ENCODE measurements at regions of chr1 and their contacts with region 1.

Region 1: DNA sequence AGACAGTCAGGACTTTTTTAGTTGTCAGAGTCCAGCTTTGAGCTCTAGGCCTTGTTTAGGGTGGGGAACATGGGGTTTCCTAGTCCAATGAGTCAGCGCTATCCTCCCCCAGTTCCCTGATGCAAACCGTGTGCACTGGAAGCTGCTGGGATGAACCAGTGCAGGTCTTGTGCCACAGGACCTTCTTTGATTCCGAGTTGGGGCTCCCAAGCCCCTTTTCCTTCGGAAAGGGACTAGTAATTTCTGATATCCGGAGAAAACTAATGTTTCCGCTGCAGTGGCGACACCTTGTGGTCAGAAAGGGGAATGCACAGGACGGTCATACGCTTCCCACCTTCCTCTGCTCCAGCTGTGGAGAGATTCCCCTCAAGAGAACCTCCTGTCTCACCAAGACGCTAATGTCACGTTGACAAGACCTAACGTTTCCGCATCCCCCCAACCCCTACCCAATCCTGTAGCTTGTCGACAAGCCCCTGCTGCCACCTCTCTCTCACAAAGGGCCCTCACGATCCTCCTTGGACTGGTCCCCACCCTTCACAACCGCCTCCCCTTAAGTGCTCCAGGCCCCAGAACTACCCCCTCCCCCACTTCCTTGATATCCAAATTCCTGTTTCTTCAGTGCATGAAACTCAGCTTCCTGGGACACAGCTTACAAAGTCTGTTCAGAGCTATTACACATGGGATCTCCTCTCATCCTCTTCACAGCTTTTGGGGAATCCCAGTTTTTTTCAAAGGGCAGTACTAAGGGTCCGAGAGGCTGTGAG is 30.9 kb downstream of the GPA33 start:
- DNase-seq: peak; percentile 79
- H3K4me3 Mint-ChIP-seq: no peak overlapping the region
- H3K27ac Mint-ChIP-seq: no peak overlapping the region
- H3K4me1 Mint-ChIP-seq: peaks cover 5% of the 10 kb centered on the region
- H3K27me3 Mint-ChIP-seq: no peaks in the 10 kb centered on the region
- CTCF ChIP-seq: peak; percentile 99

Region 2: GRCh38 chr1:166822385-166822784 is 236.8 kb before region 1 on chr1:
- CTCF ChIA-PET with region 1: interaction called, 10 read pairs
- POLR2A ChIA-PET with region 1: no interaction called
- intact Hi-C with region 1: no loop called
- DNase-seq: no peak
- H3K4me3 Mint-ChIP-seq: no peak overlapping the region
- H3K27ac Mint-ChIP-seq: no peak overlapping the region
- H3K4me1 Mint-ChIP-seq: no peaks in the 10 kb centered on the region
- H3K27me3 Mint-ChIP-seq: no peaks in the 10 kb centered on the region
- CTCF ChIP-seq: peak; percentile 25

Region 3: DNA sequence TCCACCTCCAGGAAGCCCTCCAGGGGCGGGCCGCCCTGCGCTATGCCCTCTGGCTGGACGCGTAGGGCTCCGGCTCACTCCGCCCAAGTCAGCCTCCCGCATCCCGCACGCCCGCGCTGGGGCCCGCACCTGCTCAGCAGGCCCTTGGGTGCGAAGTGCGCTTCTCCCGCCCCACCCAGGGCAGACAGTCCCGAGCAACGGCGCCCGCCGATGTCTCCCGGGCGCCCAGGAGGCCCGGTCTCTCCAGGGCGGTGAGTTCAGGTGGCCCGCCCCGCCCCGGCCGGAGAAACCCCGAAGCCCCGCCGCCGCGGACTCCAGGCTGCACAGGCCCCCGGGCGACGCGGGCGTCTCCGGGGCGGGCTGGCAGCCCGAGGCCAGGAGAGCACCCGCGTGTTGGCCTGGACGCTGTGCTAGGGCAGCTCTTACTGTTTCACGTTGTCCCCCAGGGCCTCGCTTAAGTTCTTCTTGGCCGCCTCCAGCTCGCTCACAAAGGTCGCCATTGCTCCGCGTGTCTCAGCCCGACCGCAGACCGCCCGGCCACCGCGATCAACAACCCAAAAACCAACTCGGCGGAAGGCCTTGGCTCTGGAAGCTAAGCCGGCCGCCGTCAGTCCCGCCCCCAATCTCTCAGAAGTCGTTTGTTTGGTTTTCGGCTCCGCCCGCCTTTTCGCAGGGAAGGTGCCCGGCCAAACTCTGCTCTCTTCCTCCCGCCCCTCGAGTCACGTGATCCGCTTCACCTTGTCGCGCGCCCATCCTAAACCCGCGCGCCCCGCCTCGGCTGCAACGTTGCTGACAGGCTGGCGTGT is 183.3 kb before region 1 on chr1 and contains the start of gene TADA1:
- CTCF ChIA-PET with region 1: interaction called, 89 read pairs
- POLR2A ChIA-PET with region 1: interaction called, 9 read pairs
- intact Hi-C with region 1: no loop called
- DNase-seq: peak; percentile 100
- H3K4me3 Mint-ChIP-seq: peak within 1 kb of the TSS; percentile 92
- H3K27ac Mint-ChIP-seq: peak within 1 kb of the TSS; percentile 95
- H3K4me1 Mint-ChIP-seq: peaks cover 38% of the 10 kb centered on the region
- H3K27me3 Mint-ChIP-seq: no peaks in the 10 kb centered on the region
- CTCF ChIP-seq: no peak
- total RNA-seq, gene TADA1: 14.7 and 15.9 TPM in 2 replicates

Region 4: GRCh38 chr1:166944186-166944967 is 114.8 kb before region 1 on chr1:
- CTCF ChIA-PET with region 1: interaction called, 34 read pairs
- POLR2A ChIA-PET with region 1: no interaction called
- intact Hi-C with region 1: no loop called
- DNase-seq: no peak
- H3K4me3 Mint-ChIP-seq: no peak overlapping the region
- H3K27ac Mint-ChIP-seq: no peak overlapping the region
- H3K4me1 Mint-ChIP-seq: no peaks in the 10 kb centered on the region
- H3K27me3 Mint-ChIP-seq: peaks cover 50% of the 10 kb centered on the region
- CTCF ChIP-seq: no peak

Region 5: DNA sequence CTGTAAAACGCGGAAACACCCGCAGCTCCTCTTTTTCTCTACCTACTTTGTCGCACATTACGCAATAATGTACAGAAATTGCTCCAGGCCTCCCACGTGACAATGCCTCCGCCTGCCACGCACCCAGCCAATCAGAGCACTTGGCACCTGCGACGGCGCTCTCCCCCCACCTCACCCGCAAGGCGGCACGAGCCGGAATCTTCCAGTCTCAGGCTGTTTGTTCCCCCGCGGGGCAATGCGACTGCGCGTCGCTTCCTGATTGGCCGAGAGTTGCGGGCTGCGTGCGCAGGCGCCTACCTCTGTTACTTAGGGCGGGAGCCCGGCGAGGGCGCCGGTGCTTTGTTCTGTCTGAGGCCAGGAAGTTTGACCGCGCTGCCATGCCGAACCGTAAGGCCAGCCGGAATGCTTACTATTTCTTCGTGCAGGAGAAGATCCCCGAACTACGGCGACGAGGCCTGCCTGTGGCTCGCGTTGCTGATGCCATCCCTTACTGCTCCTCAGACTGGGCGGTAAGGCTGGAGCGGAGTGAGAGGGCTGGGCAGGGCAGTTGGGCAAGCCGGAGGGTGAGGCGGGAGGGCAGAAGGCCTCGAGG is 70.2 kb before region 1 on chr1 and contains the start of gene MAEL:
- CTCF ChIA-PET with region 1: interaction called, 11 read pairs
- POLR2A ChIA-PET with region 1: no interaction called
- intact Hi-C with region 1: no loop called
- DNase-seq: no peak
- H3K4me3 Mint-ChIP-seq: no peak within 1 kb of the TSS
- H3K27ac Mint-ChIP-seq: no peak within 1 kb of the TSS
- H3K4me1 Mint-ChIP-seq: no peaks in the 10 kb centered on the region
- H3K27me3 Mint-ChIP-seq: peaks cover 33% of the 10 kb centered on the region
- CTCF ChIP-seq: no peak
- total RNA-seq, gene MAEL: not detected in 2 replicates

Region 6: GRCh38 chr1:167114725-167115124 is 55.5 kb after region 1 on chr1:
- CTCF ChIA-PET with region 1: interaction called, 13 read pairs
- POLR2A ChIA-PET with region 1: no interaction called
- intact Hi-C with region 1: no loop called
- DNase-seq: no peak
- H3K4me3 Mint-ChIP-seq: no peak overlapping the region
- H3K27ac Mint-ChIP-seq: no peak overlapping the region
- H3K4me1 Mint-ChIP-seq: peaks cover 3% of the 10 kb centered on the region
- H3K27me3 Mint-ChIP-seq: peaks cover 12% of the 10 kb centered on the region
- CTCF ChIP-seq: no peak

Region 7: GRCh38 chr1:167533851-167534300 is 474.6 kb after region 1 on chr1:
- CTCF ChIA-PET with region 1: interaction called, 29 read pairs
- POLR2A ChIA-PET with region 1: no interaction called
- intact Hi-C with region 1: no loop called
- DNase-seq: peak; percentile 90
- H3K4me3 Mint-ChIP-seq: no peak overlapping the region
- H3K27ac Mint-ChIP-seq: no peak overlapping the region
- H3K4me1 Mint-ChIP-seq: peaks cover 5% of the 10 kb centered on the region
- H3K27me3 Mint-ChIP-seq: no peaks in the 10 kb centered on the region
- CTCF ChIP-seq: peak; percentile 97

Measured in MCF 10A (cell line).